Body of pancreas (tissue), 4 donors: ENCODE measurements at regions of chr10 and their contacts with region 1.

Region 1: DNA sequence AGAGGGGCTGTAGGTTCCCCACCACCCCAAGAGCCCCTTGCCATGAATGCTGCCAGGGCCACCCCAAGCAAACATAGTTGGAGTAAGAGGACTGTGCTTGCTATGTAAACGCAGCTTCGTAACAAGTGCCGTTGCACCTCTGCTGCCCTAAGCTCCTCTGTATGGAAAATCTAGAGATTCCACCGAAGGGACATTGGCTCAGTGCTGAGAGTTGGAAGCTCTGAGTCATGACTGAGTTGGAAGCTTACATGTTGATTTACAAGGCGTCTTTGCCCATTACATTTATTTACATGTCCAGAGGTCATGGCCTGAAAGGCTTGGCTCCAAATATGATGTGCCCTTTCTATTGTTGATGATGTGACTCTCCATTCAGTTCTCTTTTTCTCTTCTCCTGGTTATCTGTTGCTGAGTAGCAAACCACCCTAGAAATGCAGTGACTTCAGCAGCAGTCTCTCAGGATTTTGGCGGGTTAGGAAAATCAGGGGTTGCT is 233.1 kb upstream of the TCF7L2 start:
- DNase-seq: peak in 2 of 4 donors; percentile 9 to 31
- ATAC-seq: no peak
- H3K4me3 ChIP-seq: no peak overlapping the region
- H3K27ac ChIP-seq: no peak overlapping the region
- H3K4me1 ChIP-seq: peaks cover 5% of the 10 kb centered on the region
- H3K27me3 ChIP-seq: no peaks in the 10 kb centered on the region
- CTCF ChIP-seq: no peak
- POLR2A ChIP-seq: no peak

Region 2: GRCh38 chr10:113139699-113140098 is 422.7 kb after region 1 on chr10:
- intact Hi-C with region 1: loop called (anchors 10 kb)
- DNase-seq: no peak
- ATAC-seq: no peak
- H3K4me3 ChIP-seq: no peak overlapping the region
- H3K27ac ChIP-seq: no peak overlapping the region
- H3K4me1 ChIP-seq: peaks cover 6% of the 10 kb centered on the region
- H3K27me3 ChIP-seq: no peaks in the 10 kb centered on the region
- CTCF ChIP-seq: peak in 1 of 7 experiments; percentile 9
- POLR2A ChIP-seq: no peak